ENCODE measurements at regions of chr19 and their contacts with region 1.

Region 1: GRCh38 chr19:38634757-38635482 is 12.5 kb upstream of the ACTN4 start:
- DNase-seq: peak; percentile 83
- ATAC-seq: no peak
- H3K4me3 Mint-ChIP-seq: no peak overlapping the region
- H3K27ac Mint-ChIP-seq: peak overlapping the region; percentile 80
- H3K4me1 Mint-ChIP-seq: peaks cover 42% of the 10 kb centered on the region
- H3K27me3 Mint-ChIP-seq: no peaks in the 10 kb centered on the region

Region 2: DNA sequence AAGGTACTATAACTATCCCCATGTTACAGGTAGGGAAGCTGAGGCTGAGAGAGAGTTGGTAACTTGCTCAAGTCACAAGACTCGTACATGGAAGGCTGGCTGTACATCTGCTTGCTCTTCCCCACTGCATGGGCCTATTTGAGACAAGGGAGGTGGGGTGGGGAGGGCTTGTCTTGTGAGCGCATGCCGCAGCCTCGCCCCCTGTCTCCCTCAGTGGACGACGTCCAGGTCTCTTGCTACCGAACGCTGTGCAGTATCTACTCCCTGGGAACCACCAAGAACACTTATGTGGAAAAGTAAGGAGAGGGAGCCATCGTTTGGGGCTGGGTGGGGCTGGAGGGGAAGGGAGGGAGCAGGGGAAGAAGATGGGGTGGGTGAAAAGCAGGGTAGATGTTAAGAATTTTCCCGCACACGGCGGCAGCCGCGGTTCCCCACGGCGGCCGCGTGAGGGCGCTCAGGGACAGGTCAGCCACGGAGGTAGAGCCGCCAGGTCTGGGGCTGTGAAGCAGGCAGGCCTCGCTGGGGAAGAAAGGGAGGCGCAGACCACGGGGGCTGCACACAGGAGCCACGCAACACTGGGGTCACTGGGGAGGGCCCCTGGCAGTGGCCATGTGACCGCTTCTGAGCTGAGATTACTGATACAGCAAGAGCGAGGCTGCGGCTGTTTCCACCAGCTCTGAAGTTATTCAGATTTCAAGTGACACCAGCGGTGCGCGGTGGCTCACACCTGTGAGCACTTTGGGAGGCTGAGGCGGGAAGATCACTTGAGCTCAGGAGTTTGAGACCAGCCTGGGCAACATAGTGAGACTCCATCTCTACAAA is 119.9 kb before region 1 on chr19:
- CTCF ChIA-PET with region 1: interaction called, 35 read pairs
- DNase-seq: peak; percentile 81
- ATAC-seq: peak; percentile 84
- H3K4me3 Mint-ChIP-seq: no peak overlapping the region
- H3K27ac Mint-ChIP-seq: peak overlapping the region; percentile 15
- H3K4me1 Mint-ChIP-seq: peaks cover 29% of the 10 kb centered on the region
- H3K27me3 Mint-ChIP-seq: peaks cover 21% of the 10 kb centered on the region

Region 3: DNA sequence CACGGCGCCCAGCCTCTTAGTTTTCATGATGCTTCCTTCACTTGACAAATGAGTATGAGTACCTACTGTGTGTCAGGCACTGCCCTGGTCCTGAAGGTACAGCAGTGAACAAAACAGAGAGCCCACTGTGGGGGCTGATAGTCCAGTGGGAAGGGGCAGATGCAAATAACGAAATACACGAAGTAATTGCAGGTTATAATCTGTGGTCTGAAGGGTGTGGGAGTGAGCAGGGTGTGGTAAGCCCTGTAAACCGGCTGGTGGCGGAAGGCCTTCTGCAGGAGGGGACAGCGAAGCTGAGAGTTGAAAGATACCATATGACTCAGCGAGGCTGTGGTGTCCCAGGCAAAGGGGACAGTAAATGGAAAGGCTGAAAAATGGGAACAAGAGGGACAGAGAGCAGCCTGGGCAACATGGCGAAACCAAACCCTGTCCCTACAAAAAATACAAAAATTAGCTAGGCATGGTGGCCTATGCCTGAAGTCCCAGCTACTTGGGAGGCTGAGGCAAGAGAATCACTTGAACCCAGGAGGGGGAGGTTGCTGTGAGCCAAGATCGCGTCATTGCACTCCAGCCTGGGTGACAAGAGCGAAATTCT is 77.6 kb before region 1 on chr19:
- CTCF ChIA-PET with region 1: interaction called, 26 read pairs
- DNase-seq: peak; percentile 91
- ATAC-seq: peak; percentile 75
- H3K4me3 Mint-ChIP-seq: peak overlapping the region; percentile 69
- H3K27ac Mint-ChIP-seq: peak overlapping the region; percentile 95
- H3K4me1 Mint-ChIP-seq: peaks cover 74% of the 10 kb centered on the region
- H3K27me3 Mint-ChIP-seq: peaks cover 7% of the 10 kb centered on the region

Region 4: DNA sequence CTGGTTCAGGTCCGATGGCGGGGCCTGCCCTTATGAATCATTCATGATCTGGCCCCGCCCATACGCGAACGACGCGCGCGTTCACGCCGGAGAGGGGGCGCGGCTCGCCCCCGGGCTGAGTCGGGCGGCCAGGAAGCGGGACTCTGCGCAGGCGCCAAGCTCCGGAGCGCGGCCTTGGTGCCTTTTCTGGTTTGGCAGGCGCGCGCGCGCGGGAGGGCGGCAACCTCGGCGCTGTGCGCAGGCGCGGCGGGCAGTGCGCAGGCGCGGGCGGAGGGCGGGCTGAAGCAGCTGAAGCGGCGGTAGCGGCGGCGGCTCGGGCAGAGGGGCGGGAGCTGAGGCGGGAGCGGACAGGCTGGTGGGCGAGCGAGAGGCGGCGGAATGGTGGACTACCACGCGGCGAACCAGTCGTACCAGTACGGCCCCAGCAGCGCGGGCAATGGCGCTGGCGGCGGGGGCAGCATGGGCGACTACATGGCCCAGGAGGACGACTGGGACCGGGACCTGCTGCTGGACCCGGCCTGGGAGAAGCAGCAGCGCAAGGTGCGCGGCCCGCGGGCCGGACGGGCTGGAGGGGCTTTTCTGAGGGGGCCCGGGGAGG is 12.5 kb after region 1 on chr19 and contains the start of gene ACTN4:
- CTCF ChIA-PET with region 1: interaction called, 75 read pairs
- DNase-seq: peak; percentile 99
- ATAC-seq: peak; percentile 93
- H3K4me3 Mint-ChIP-seq: peak within 1 kb of the TSS; percentile 93
- H3K27ac Mint-ChIP-seq: peak within 1 kb of the TSS; percentile 78
- H3K4me1 Mint-ChIP-seq: peaks cover 47% of the 10 kb centered on the region
- H3K27me3 Mint-ChIP-seq: no peaks in the 10 kb centered on the region
- total RNA-seq, gene ACTN4: 413 to 433 TPM

Region 5: DNA sequence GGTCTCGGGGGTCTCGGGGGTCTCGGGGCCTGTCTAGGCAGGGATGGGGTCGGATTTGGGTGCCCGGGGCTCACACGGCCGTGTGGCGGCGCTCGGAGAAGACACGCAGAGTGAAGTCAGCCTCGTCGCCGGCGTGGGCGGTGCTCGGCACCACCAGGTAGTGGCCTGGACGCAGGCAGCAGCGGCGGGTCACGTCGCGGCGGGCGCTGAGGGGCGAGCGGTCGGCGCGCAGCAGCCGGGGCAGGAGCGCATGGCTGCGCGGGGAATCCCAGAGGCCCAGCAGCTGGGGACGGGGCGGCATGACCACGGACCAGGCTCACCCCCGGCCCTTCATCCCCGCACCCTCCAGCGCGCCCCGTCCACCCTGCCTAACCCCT is 101.1 kb after region 1 on chr19:
- CTCF ChIA-PET with region 1: interaction called, 13 read pairs
- DNase-seq: peak; percentile 77
- ATAC-seq: peak; percentile 57
- H3K4me3 Mint-ChIP-seq: peak overlapping the region; percentile 61
- H3K27ac Mint-ChIP-seq: peak overlapping the region; percentile 46
- H3K4me1 Mint-ChIP-seq: peaks cover 55% of the 10 kb centered on the region
- H3K27me3 Mint-ChIP-seq: peaks cover 4% of the 10 kb centered on the region

Measured in activated CD8-positive, alpha-beta memory T cell treated with anti-CD3 and anti-CD28 coated beads, Interleukin-2, amount 10 ng/mL, durations not matched to agents 7 days and 5 days (primary cell).